ENCODE measurements at regions of chr2 and their contacts with region 1.

Region 1: DNA sequence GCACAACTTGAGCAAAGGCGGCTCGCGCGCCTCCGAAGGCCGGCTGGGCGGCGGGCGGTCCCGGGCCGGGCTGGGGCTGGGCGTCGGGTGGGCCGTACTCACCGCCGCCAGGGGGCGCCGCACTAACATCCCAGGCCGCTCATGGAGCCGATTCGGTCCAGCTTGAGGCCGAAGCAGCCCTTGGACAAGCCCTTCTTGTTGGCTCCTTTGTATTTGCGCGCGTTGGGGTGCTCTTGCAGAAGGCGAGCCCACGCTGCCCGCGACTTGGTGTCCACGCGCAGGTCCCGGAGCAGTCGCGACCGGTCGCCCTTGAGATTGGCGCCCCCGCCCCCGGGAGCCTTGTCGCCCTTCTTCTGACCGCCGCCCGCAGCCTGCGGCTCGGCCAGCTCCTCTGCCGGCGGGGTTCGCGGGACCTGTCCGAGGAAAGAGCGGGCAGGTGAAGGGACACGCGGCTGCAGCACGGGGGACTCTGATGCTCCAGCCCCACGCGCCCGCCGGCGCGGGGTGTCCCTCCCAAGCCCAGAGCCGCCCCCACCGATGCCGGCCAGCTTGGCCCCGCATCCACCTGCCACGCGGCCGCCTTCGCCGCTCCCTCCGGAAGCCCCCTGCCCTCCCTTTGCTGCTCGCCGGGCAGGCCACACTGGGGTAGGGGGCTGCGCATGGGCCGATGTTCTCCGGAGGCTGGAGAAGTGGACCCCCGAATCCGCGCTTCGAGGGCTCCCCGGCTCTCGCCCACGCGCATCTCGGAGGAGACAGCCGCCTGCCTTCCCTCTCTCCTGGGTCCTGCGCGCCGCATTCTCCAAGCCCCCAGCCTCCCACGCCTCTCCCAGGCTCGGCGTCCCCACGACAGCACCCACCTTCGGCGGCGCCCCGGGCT is 655 bp downstream of the NPPC start:
- DNase-seq: peak; percentile 92
- ATAC-seq: peak; percentile 79

Region 2: GRCh38 chr2:231987124-231987727 is 61.7 kb after region 1 on chr2:
- intact Hi-C with region 1: loop called (anchors 5 kb)
- DNase-seq: no peak
- ATAC-seq: peak; percentile 91

Region 3: DNA sequence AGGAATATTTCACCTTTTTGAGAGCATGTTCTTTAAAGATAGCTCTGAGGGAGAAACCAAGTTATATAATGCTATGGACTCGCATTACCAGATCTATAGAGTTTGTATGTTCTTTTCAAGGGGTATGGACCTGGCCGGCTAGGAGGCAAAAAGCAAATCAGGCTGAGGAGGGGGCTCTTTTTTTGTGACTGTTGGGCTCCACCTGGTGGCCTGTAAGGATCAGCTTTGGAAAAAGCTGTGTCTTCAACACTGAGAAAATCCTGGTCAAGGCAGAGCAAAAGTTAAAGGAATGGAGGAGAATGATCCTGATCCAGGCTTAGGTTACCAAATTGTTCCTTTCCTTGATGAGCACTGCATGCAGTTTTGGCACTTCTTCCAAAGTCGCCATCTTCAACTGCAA is 216.5 kb after region 1 on chr2:
- intact Hi-C with region 1: loop called (anchors 1 kb)
- DNase-seq: no peak
- ATAC-seq: peak; percentile 50

Region 4: GRCh38 chr2:232327105-232328041 is 401.8 kb after region 1 on chr2:
- intact Hi-C with region 1: loop called (anchors 5 kb)
- DNase-seq: peak; percentile 89
- ATAC-seq: peak; percentile 42

Region 5: GRCh38 chr2:232438951-232439757 is 513.6 kb after region 1 on chr2:
- intact Hi-C with region 1: loop called (anchors 5 kb)
- DNase-seq: no peak
- ATAC-seq: peak; percentile 60